HepG2 (cell line): ENCODE measurements at regions of chrX and their contacts with region 1.

Region 1: GRCh38 chrX:100512471-100512870 is 72.3 kb upstream of the TNMD start:
- DNase-seq: no peak
- ATAC-seq: no peak
- H3K4me3 ChIP-seq: no peak overlapping the region
- H3K27ac ChIP-seq: no peak overlapping the region
- H3K4me1 ChIP-seq: no peaks in the 10 kb centered on the region
- H3K27me3 ChIP-seq: no peaks in the 10 kb centered on the region
- CTCF ChIP-seq: peak; percentile 47
- EP300 ChIP-seq: no peak
- POLR2A ChIP-seq: no peak
- RAD21 ChIP-seq: no peak

Region 2: GRCh38 chrX:100615005-100615404 is 102.5 kb after region 1 on chrX:
- CTCF ChIA-PET with region 1: no interaction called
- POLR2A ChIA-PET with region 1: no interaction called
- in situ Hi-C with region 1: no loop called
- intact Hi-C with region 1: loop called (anchors 2 kb)
- DNase-seq: peak; percentile 57
- ATAC-seq: peak; percentile 79
- H3K4me3 ChIP-seq: no peak overlapping the region
- H3K27ac ChIP-seq: no peak overlapping the region
- H3K4me1 ChIP-seq: peaks cover 8% of the 10 kb centered on the region; the same call in 1 of the 2 replicates
- H3K27me3 ChIP-seq: no peaks in the 10 kb centered on the region
- CTCF ChIP-seq: peak; percentile 50
- EP300 ChIP-seq: no peak
- POLR2A ChIP-seq: no peak
- RAD21 ChIP-seq: no peak

Region 3: GRCh38 chrX:100636321-100636991 is 124.0 kb after region 1 on chrX and contains the start of gene TSPAN6:
- CTCF ChIA-PET with region 1: no interaction called
- POLR2A ChIA-PET with region 1: no interaction called
- in situ Hi-C with region 1: no loop called
- intact Hi-C with region 1: loop called (anchors 1 kb)
- DNase-seq: peak; percentile 86
- ATAC-seq: peak; percentile 99
- H3K4me3 ChIP-seq: peak within 1 kb of the TSS; percentile 66 to 77 (median 73)
- H3K27ac ChIP-seq: peak within 1 kb of the TSS; percentile 92
- H3K4me1 ChIP-seq: peaks cover 30% of the 10 kb centered on the region; the same call in 1 of the 2 replicates
- H3K27me3 ChIP-seq: no peaks in the 10 kb centered on the region; a peak in 1 of 5 replicates
- CTCF ChIP-seq: peak; percentile 67
- EP300 ChIP-seq: no peak
- POLR2A ChIP-seq: peak; percentile 51 to 52; a peak in 2 of 4 replicates
- RAD21 ChIP-seq: 0 out of 2 replicates have a peak, but pooled peaks have one; percentile 18
- total RNA-seq, gene TSPAN6: 78.4 and 133 TPM in 2 replicates

Region 4: DNA sequence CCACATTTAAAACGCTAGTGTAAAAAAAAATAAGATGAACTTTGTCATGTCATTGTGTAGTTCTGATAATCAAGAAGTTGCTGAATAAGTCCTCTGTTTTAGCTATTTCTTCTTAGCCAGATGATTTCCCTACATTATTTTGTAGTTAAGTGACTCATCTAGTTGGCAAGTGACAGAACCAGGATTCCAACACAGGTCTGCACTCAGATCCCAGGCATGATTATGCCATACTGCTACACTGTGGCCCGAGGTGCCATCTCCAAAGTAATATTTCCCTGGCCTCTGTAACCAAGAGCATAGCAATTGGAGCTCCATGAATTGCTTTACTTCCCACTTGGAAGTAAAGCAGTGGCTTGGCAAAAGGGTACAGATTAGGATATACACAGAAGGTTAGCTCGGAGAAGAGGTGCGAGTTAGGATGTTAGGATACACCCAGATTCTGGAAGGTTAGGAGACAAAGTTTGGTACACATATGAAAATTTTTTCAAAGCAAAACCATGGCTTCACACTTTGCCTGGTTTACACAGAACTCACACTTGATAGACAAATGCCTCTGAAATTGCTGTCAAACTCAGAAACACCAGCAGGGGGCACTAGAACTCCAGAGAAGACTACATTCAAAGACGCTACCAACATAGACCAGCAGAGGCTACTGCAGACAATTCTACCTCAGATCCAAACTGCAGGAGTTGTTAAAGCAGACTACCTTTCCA is 173.0 kb after region 1 on chrX:
- CTCF ChIA-PET with region 1: interaction called, 3 read pairs
- POLR2A ChIA-PET with region 1: no interaction called
- in situ Hi-C with region 1: no loop called
- intact Hi-C with region 1: loop called (anchors 10 kb)
- DNase-seq: peak; percentile 62
- ATAC-seq: peak; percentile 90
- H3K4me3 ChIP-seq: no peak overlapping the region
- H3K27ac ChIP-seq: no peak overlapping the region
- H3K4me1 ChIP-seq: no peaks in the 10 kb centered on the region
- H3K27me3 ChIP-seq: no peaks in the 10 kb centered on the region
- CTCF ChIP-seq: peak; percentile 78
- EP300 ChIP-seq: no peak
- POLR2A ChIP-seq: no peak
- RAD21 ChIP-seq: peak; percentile 76

Region 5: DNA sequence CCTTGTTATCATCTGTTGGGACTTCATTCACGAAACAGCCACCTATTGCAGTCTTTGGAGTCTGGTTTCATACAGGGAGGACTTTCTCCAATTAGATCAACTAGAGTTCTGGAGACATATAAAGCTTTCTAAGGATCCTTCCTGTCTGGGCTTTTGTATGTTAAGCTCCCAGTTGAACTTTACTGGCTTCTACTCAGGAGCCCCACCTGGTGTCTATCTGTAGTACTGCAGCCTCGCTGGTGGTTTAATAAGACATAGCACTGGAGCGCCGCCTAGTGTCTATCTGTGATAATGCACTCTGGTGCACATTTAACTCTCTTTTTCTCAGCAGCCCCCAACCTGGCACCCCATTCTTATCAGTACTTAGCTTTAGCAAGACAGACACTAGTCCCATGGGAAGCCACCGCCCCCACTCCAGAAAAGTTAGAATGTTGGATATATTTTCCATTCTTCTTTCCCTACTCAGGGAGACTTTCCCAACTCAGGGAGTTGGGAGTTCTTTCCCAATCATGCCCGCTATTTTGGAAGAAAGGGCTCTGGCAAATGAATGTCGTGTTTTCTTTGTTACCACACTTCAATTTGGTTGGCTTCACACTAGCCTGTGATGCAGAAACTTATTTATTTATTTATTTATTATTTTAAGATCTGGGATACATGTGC is 256.3 kb after region 1 on chrX:
- CTCF ChIA-PET with region 1: interaction called, 10 read pairs
- POLR2A ChIA-PET with region 1: no interaction called
- in situ Hi-C with region 1: no loop called
- intact Hi-C with region 1: no loop called
- DNase-seq: peak; percentile 49
- ATAC-seq: no peak; the same call in 2 of the 3 replicates
- H3K4me3 ChIP-seq: no peak overlapping the region
- H3K27ac ChIP-seq: no peak overlapping the region
- H3K4me1 ChIP-seq: no peaks in the 10 kb centered on the region
- H3K27me3 ChIP-seq: no peaks in the 10 kb centered on the region
- CTCF ChIP-seq: peak; percentile 90
- EP300 ChIP-seq: no peak
- POLR2A ChIP-seq: no peak
- RAD21 ChIP-seq: peak; percentile 86